ENCODE measurements at regions of chr16 and their contacts with region 1.

Region 1: DNA sequence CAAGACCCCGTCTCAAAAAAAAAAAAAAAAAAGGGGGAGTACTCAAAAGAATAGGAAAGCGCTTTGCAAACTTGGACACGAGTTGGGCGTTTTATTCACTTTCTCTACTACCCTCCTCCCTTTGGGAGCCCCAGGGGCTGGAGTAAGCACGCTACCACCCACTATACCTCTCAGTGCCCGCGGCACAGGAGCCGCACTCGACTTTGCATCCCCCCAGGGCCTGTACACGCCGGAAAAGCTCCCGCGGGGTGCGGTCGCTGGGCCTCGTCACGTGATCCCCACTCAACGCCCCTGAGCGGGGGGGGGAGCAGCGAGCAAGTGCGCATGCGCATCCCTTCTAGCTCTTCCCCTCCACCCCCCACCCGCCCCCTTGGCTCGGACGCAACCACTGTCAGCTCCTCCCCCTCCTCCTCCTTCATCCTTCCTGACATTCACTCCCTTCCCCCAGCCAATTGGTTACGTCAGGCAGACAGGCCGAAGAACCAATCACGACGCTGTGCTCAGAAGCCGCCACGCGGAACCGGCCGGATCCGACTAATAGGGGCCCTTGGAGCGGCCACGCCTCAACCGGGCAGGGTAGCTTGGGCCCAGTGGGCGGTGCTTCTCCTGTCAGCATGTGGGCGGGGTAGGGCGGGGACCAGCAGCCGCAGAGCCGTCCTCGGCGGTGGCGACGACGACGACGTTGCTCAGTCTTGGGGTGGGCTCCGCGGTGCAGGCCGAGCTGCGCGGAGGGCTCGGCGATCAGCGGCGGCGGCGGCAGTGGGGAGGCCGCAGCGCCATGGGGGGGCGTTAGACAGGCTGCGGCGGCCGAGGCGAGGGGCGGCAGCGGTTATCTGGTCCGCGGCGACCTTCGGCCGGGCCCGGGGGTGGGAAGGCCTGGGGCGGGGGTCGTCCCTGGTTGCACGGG is at the start of gene HAPSTR1:
- DNase-seq: peak; percentile 99
- H3K4me3 Mint-ChIP-seq: peak within 1 kb of the TSS; percentile 97
- H3K27ac Mint-ChIP-seq: peak within 1 kb of the TSS; percentile 98
- H3K4me1 Mint-ChIP-seq: peaks cover 28% of the 10 kb centered on the region
- H3K27me3 Mint-ChIP-seq: peaks cover 2% of the 10 kb centered on the region
- total RNA-seq, gene HAPSTR1: 53.4 and 54.2 TPM in 2 replicates

Region 2: DNA sequence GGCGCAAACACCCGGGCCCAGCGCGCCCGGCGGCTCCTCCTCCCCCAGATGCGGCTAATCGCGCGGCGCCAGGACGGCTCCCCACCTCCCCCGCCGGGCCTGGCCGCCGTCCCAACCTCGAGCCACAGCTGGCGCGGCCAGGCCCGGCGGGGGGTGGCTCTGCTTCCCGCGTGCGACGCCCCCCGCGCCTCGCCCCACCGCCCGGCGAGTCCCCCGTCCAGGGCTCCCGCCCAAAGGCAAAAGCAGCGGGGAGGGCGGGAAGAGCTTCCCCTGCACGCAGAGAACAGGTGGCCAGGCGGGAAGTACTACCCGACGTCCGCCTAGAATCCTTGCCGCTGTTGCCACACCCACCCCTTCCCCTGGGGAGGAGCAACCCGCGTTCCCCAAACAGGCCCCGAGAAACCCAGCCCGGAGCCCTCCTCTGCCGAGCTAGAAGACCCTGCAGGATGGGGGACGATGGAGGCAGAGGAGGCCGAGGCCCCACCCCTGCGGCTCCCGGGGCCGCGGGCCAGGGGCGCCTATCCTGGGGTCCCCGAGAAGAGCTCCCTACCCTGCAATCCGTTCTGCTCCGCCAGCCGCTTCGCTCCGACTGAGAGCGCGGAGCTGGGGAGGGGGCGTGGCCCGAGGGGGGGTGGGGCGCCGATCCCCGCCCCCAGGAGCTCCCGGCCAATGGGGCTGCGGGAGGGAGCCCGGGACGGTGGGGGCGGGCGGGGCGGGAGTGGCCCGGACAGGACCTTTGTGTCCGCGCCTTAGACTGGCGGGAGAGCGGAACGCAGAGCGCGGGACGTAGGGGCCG is 222.6 kb before region 1 on chr16 and contains the start of gene CARHSP1:
- intact Hi-C with region 1: loop called (anchors 1 kb)
- DNase-seq: peak; percentile 95
- H3K4me3 Mint-ChIP-seq: peak within 1 kb of the TSS; percentile 90
- H3K27ac Mint-ChIP-seq: peak within 1 kb of the TSS; percentile 89
- H3K4me1 Mint-ChIP-seq: peaks cover 39% of the 10 kb centered on the region
- H3K27me3 Mint-ChIP-seq: no peaks in the 10 kb centered on the region
- total RNA-seq, gene CARHSP1: 67.7 and 73.3 TPM in 2 replicates

Region 3: GRCh38 chr16:8963825-8964441 is 127.3 kb before region 1 on chr16 and contains the start of gene USP7:
- intact Hi-C with region 1: loop called (anchors 2 kb)
- DNase-seq: peak; percentile 98
- H3K4me3 Mint-ChIP-seq: peak within 1 kb of the TSS; percentile 94
- H3K27ac Mint-ChIP-seq: peak within 1 kb of the TSS; percentile 93
- H3K4me1 Mint-ChIP-seq: peaks cover 37% of the 10 kb centered on the region
- H3K27me3 Mint-ChIP-seq: peaks cover 5% of the 10 kb centered on the region
- total RNA-seq, gene USP7: 180 and 186 TPM in 2 replicates

Region 4: DNA sequence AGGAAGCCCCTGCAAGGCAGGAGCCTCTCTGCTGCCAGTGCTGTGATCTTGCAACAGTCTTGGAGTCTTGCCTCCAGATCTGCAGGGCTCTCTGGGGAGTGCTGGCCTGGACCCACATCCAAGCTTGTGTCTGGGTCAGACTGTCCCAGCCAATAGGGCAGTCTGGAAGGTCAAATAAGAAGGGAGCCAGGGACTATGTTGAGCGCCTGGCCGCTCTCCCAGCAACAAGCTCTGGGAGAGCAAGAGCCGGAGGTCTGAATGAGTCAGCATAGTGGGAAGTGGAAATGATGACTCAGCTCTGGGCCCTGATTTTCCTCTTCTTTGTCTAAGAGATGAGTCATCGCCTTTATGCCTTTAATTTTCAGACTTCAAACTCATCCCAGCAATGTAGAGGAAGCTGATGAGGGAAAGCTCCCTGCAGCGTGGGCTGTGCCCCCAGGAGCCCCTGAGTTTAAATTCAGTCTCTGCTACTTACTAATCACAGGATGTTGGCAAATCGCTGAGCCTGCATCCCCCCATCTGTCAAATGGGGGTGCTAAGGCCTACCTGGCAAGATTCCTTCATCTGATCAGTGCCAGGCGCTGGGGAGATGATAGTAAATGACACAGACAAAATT is 43.4 kb before region 1 on chr16:
- intact Hi-C with region 1: loop called (anchors 2 kb)
- DNase-seq: peak; percentile 79
- H3K4me3 Mint-ChIP-seq: peak overlapping the region; percentile 24
- H3K27ac Mint-ChIP-seq: peak overlapping the region; percentile 83
- H3K4me1 Mint-ChIP-seq: peaks cover 31% of the 10 kb centered on the region
- H3K27me3 Mint-ChIP-seq: no peaks in the 10 kb centered on the region

Region 5: DNA sequence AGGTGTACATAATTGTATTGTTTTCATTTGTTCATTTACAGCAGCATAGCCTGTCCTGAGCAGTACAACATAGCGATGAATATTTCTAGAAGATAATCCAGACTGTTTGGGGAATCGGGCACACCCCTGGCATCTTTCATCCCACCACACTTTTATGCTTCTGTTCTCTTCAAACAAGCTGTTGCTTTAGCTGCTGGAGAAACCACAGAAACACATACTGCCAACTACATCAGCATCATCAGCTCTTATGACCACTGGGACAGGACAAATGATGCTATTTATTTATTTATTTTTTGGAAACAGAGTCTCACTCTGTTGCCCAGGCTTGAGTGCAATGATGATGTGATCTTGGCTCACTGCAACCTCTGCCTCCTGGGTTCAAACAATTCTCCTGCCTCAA is 22.3 kb before region 1 on chr16:
- intact Hi-C with region 1: loop called (anchors 1 kb)
- DNase-seq: no peak
- H3K4me3 Mint-ChIP-seq: no peak overlapping the region
- H3K27ac Mint-ChIP-seq: no peak overlapping the region
- H3K4me1 Mint-ChIP-seq: peaks cover 15% of the 10 kb centered on the region
- H3K27me3 Mint-ChIP-seq: no peaks in the 10 kb centered on the region

Region 6: DNA sequence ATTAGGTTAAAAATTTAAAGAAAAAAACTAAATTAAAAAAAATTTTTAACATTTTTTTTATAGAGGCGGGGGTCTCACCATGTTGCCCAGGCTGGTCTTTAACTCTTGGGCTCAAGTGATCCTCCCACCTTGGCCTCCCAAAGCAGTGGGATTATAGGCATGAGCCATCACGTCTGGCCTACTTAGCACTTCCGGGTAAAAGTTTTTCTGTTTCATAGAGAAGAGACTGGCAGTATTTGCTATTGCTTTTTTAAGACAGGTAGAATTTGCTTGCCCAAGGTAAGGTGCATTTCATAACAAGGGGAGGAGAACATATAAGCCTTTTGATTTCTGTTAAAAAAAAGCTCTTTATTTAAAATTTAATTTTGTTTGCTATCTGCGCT is 11.8 kb before region 1 on chr16:
- intact Hi-C with region 1: loop called (anchors 1 kb)
- DNase-seq: no peak
- H3K4me3 Mint-ChIP-seq: no peak overlapping the region
- H3K27ac Mint-ChIP-seq: peak overlapping the region; percentile 71
- H3K4me1 Mint-ChIP-seq: peaks cover 27% of the 10 kb centered on the region
- H3K27me3 Mint-ChIP-seq: no peaks in the 10 kb centered on the region

Region 7: GRCh38 chr16:9125658-9126505 is 34.7 kb after region 1 on chr16:
- intact Hi-C with region 1: loop called (anchors 2 kb)
- DNase-seq: no peak
- H3K4me3 Mint-ChIP-seq: no peak overlapping the region
- H3K27ac Mint-ChIP-seq: peak overlapping the region; percentile 50
- H3K4me1 Mint-ChIP-seq: peaks cover 43% of the 10 kb centered on the region
- H3K27me3 Mint-ChIP-seq: no peaks in the 10 kb centered on the region

Measured in activated CD4-positive, alpha-beta T cell treated with anti-CD3 and anti-CD28 coated beads, Interleukin-2, amount 10 ng/mL, durations not matched to agents 24 days and 14 days (primary cell).